Natural killer cell (primary cell): ENCODE measurements at regions of chr14 and their contacts with region 1.

Region 1: DNA sequence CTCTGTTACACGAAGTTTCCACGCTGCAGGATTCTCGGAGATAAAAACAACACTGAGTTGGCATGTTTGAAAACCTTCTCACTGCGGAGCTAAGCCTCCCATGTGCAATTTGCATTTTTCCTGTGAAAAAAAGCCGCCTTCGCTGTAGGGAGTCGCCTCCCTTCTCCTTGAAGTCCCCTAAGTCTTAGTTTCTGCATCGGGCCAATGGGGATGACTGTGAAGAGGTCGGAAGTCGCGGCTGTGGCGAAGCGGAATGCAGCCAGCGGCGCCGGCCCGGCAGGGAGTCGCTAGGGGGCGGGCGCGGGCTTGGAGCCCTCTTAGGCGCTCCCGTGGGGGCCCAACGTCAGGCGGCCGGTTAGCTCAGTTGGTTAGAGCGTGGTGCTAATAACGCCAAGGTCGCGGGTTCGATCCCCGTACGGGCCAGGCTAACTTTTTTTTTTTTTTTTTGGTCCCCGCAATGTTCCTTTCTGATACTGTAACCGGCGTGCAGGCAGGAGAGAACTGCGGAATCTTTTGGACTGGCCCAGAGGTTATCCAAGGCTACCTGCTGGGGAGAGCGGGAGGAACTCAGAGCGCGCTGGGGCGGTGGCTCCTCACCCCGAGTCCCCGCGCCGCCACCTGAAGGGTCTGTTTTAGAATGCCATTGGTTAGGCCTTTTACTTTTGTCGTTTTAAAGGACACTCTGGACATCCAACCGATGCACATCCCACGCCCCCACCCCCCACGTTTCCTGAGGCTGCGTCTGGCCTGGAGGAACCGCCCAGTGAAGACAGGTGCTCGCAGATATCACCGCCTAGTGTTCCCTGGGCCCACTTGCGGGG is 2.6 kb upstream of the ZNF839 start:
- DNase-seq: peak; percentile 94 to 96
- ATAC-seq: peak; percentile 68 to 83 (median 73)
- H3K4me3 ChIP-seq: peak overlapping the region; percentile 65
- H3K4me3 Mint-ChIP-seq: peak overlapping the region; percentile 97
- H3K27ac ChIP-seq: peak overlapping the region; percentile 68
- H3K27ac Mint-ChIP-seq: peak overlapping the region; percentile 98 to 99
- H3K4me1 ChIP-seq: peaks cover 53% of the 10 kb centered on the region
- H3K4me1 Mint-ChIP-seq: peaks cover 57 to 58% of the 10 kb centered on the region in 2 donors
- H3K27me3 ChIP-seq: no peaks in the 10 kb centered on the region
- H3K27me3 Mint-ChIP-seq: no peaks in the 10 kb centered on the region
- CTCF ChIP-seq: peak; percentile 88

Region 2: GRCh38 chr14:101964297-101965144 is 352.4 kb before region 1 on chr14 and contains the start of gene DYNC1H1:
- intact Hi-C with region 1: loop called (anchors 5 kb)
- DNase-seq: peak; percentile 91 to 95
- ATAC-seq: peak; percentile 85 to 93 (median 89)
- H3K4me3 ChIP-seq: peak within 1 kb of the TSS; percentile 73
- H3K4me3 Mint-ChIP-seq: peak within 1 kb of the TSS; percentile 95
- H3K27ac ChIP-seq: peak within 1 kb of the TSS; percentile 84
- H3K27ac Mint-ChIP-seq: peak within 1 kb of the TSS; percentile 90 to 91
- H3K4me1 ChIP-seq: peaks cover 22% of the 10 kb centered on the region
- H3K4me1 Mint-ChIP-seq: peaks cover 35 to 45% of the 10 kb centered on the region in 2 donors
- H3K27me3 ChIP-seq: no peaks in the 10 kb centered on the region
- H3K27me3 Mint-ChIP-seq: peaks cover 0 to 2% of the 10 kb centered on the region in 2 donors
- CTCF ChIP-seq: no peak
- total RNA-seq, gene DYNC1H1: 313 to 381 (median 349) TPM

Region 3: DNA sequence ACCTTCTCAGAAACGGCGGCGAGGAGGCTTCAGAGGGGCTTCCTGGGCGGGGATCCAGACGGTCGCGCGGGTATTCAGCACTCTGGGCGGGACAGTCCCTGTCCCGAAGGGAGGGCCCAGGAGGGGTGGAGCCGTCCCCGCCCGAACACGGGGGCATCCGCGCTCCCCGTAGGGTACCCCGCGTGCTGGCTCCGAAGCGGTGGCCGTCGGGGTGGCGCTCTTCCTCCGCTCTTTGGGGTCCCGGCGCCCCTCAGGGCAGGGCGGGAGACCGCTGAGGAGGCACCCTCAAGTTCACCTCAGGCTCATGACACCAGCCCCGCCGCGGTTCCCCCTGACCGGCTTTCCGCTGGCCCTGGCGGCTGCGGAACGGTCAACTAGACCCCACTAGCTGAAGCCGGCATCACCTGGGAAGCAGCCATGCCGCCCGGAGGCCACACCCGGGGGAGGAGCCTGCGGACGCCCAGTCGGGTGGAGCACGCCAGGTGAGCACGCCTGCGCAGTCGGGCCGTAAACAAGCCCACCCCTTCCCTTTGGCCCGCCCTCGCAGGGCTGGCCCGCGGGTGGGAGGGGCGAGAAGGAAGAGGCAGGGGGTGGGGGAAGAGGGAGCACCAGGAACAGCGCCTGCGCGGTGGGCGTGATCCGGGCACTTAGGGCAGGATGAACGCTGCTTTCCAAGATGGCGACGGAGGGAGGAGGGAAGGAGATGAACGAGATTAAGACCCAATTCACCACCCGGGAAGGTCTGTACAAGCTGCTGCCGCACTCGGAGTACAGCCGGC is 177.5 kb before region 1 on chr14 and contains the start of gene WDR20:
- intact Hi-C with region 1: loop called (anchors 2 kb)
- DNase-seq: peak; percentile 95 to 100
- ATAC-seq: peak; percentile 94 to 99 (median 95)
- H3K4me3 ChIP-seq: peak within 1 kb of the TSS; percentile 99
- H3K4me3 Mint-ChIP-seq: peak within 1 kb of the TSS; percentile 96
- H3K27ac ChIP-seq: peak within 1 kb of the TSS; percentile 86
- H3K27ac Mint-ChIP-seq: peak within 1 kb of the TSS; percentile 92 to 96
- H3K4me1 ChIP-seq: peaks cover 14% of the 10 kb centered on the region
- H3K4me1 Mint-ChIP-seq: peaks cover 25 to 28% of the 10 kb centered on the region in 2 donors
- H3K27me3 ChIP-seq: no peaks in the 10 kb centered on the region
- H3K27me3 Mint-ChIP-seq: no peaks in the 10 kb centered on the region
- CTCF ChIP-seq: no peak
- total RNA-seq, gene WDR20: 55.5 to 66.7 (median 62.2) TPM

Region 4: DNA sequence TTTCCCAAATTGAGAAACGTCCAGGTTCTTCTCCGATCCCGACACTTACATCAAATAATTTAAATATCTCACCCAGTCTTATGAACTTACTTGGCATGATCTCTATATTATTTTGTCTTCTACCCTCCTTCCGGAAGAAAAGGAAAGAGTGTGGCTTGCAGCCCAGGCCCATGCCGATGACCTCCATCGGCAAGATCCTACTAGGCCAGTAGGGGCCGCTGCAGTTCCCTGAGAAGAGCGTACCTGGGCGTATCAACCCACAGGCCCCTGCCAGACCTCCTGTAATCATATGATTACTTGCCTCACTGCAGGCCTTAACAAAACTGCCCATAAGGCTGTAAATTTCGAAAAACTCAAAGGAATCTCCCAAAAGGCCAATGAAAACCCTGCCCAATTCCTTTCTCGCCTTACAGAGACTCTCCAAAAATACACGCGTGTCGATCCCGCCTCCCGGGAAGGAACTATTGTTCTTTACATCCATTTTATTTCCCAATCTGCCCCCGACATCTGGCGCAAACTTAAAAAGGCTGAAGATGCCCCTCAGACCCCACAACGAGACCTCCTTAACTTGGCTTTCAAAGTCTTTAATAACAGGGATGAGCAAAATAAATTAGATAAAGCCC is 81.6 kb before region 1 on chr14:
- intact Hi-C with region 1: loop called (anchors 1 kb)
- DNase-seq: peak; percentile 59 to 84
- ATAC-seq: peak; percentile 82 to 98 (median 97)
- H3K4me3 ChIP-seq: peak overlapping the region; percentile 14
- H3K4me3 Mint-ChIP-seq: no peak overlapping the region
- H3K27ac ChIP-seq: no peak overlapping the region
- H3K27ac Mint-ChIP-seq: no peak overlapping the region
- H3K4me1 ChIP-seq: no peaks in the 10 kb centered on the region
- H3K4me1 Mint-ChIP-seq: no peaks in the 10 kb centered on the region
- H3K27me3 ChIP-seq: no peaks in the 10 kb centered on the region
- H3K27me3 Mint-ChIP-seq: peaks cover 0 to 1% of the 10 kb centered on the region in 2 donors
- CTCF ChIP-seq: peak; percentile 70

Region 5: GRCh38 chr14:102352213-102352612 is 35.3 kb after region 1 on chr14:
- intact Hi-C with region 1: no loop called
- DNase-seq: no peak
- ATAC-seq: no peak
- H3K4me3 ChIP-seq: no peak overlapping the region
- H3K4me3 Mint-ChIP-seq: no peak overlapping the region
- H3K27ac ChIP-seq: no peak overlapping the region
- H3K27ac Mint-ChIP-seq: no peak overlapping the region
- H3K4me1 ChIP-seq: no peaks in the 10 kb centered on the region
- H3K4me1 Mint-ChIP-seq: peaks cover 0 to 3% of the 10 kb centered on the region in 2 donors
- H3K27me3 ChIP-seq: no peaks in the 10 kb centered on the region
- H3K27me3 Mint-ChIP-seq: no peaks in the 10 kb centered on the region
- CTCF ChIP-seq: no peak

Region 6: GRCh38 chr14:102362545-102363181 is 45.7 kb after region 1 on chr14 and contains the starts of genes CINP and TECPR2:
- intact Hi-C with region 1: loop called (anchors 1 kb)
- DNase-seq: peak; percentile 92 to 96
- ATAC-seq: peak; percentile 90 to 97 (median 94)
- H3K4me3 ChIP-seq: peak within 1 kb of the TSS; percentile 71
- H3K4me3 Mint-ChIP-seq: peak within 1 kb of the TSS; percentile 88
- H3K27ac ChIP-seq: peak within 1 kb of the TSS; percentile 74
- H3K27ac Mint-ChIP-seq: no peak within 1 kb of the TSS
- H3K4me1 ChIP-seq: peaks cover 18% of the 10 kb centered on the region
- H3K4me1 Mint-ChIP-seq: peaks cover 19 to 33% of the 10 kb centered on the region in 2 donors
- H3K27me3 ChIP-seq: no peaks in the 10 kb centered on the region
- H3K27me3 Mint-ChIP-seq: no peaks in the 10 kb centered on the region
- CTCF ChIP-seq: no peak
- total RNA-seq, gene CINP: 22.4 to 30.0 (median 23.3) TPM
- total RNA-seq, gene TECPR2: 10.8 to 18.6 (median 15.3) TPM

Region 7: GRCh38 chr14:102516531-102517415 is 199.8 kb after region 1 on chr14:
- intact Hi-C with region 1: loop called (anchors 5 kb)
- DNase-seq: peak; percentile 72 to 77
- ATAC-seq: peak; percentile 84 to 93 (median 91)
- H3K4me3 ChIP-seq: peak overlapping the region; percentile 26
- H3K4me3 Mint-ChIP-seq: peak overlapping the region; percentile 91
- H3K27ac ChIP-seq: no peak overlapping the region
- H3K27ac Mint-ChIP-seq: peak overlapping the region; percentile 53 to 81
- H3K4me1 ChIP-seq: peaks cover 6% of the 10 kb centered on the region
- H3K4me1 Mint-ChIP-seq: peaks cover 4 to 9% of the 10 kb centered on the region in 2 donors
- H3K27me3 ChIP-seq: no peaks in the 10 kb centered on the region
- H3K27me3 Mint-ChIP-seq: peaks cover 0 to 8% of the 10 kb centered on the region in 2 donors
- CTCF ChIP-seq: peak; percentile 97